Aorta (tissue), 5 donors: ENCODE measurements at regions of chrX and their contacts with region 1.

Region 1: GRCh38 chrX:154748712-154749343 is 2.0 kb downstream of the GAB3 start:
- DNase-seq: no peak
- ATAC-seq: peak; percentile 81
- H3K4me3 ChIP-seq: no peak overlapping the region
- H3K27ac ChIP-seq: no peak overlapping the region
- H3K4me1 ChIP-seq: no peaks in the 10 kb centered on the region
- H3K27me3 ChIP-seq: no peaks in the 10 kb centered on the region

Region 2: DNA sequence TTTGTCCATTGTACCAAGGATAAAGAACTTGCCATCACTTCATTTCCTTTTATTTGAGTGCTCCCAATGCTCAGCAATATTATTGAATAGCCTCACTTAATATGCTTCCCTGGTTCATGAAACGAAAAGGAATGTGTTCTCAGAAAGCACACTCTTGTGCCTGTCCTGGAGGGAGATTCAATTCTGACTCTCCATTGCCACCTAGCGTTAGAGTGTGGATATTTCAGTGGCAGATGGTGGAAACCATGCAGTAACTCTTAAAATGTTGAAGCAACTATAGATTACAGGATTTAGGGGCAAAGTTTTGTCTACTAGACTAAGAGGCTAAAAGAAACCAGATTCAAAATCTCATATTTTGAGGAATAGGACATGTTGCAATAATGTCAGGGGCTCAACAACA is 33.9 kb before region 1 on chrX:
- intact Hi-C with region 1: loop called (anchors 5 kb)
- DNase-seq: no peak
- ATAC-seq: peak; percentile 68
- H3K4me3 ChIP-seq: no peak overlapping the region
- H3K27ac ChIP-seq: no peak overlapping the region
- H3K4me1 ChIP-seq: no peaks in the 10 kb centered on the region
- H3K27me3 ChIP-seq: no peaks in the 10 kb centered on the region

Region 3: GRCh38 chrX:155169881-155170280 is 421.1 kb after region 1 on chrX:
- intact Hi-C with region 1: no loop called
- DNase-seq: no peak
- ATAC-seq: no peak
- H3K4me3 ChIP-seq: no peak overlapping the region
- H3K27ac ChIP-seq: no peak overlapping the region
- H3K4me1 ChIP-seq: no peaks in the 10 kb centered on the region
- H3K27me3 ChIP-seq: no peaks in the 10 kb centered on the region